Left ventricle myocardium superior (tissue), 1 donor: ENCODE measurements at regions of chr3 and their contacts with region 1.

Region 1: GRCh38 chr3:29212789-29213433 is 68.0 kb upstream of the RBMS3 start:
- DNase-seq: no peak
- ATAC-seq: no peak

Region 2: DNA sequence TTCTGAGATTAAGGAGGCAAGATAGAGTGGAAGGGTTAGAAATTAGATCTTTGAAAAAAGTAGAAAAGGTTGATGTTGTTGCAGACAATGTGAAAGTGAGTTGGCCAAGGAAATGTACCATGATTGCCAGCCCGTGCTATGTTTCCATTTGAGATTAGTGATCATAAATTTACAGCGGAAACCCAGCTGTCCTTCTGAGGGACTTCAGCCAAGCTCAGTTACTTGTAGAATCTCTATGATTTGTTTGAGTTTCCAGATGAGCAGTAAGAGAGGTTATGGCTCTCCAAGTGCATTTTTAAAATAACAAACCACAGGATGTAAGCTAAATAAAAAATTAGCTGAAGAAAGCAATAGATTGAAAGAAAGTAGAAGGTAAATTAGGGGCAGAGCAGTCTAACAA is 13.8 kb after region 1 on chr3:
- intact Hi-C with region 1: loop called (anchors 1 kb)
- DNase-seq: no peak
- ATAC-seq: no peak

Region 3: GRCh38 chr3:30012941-30013543 is 800.1 kb after region 1 on chr3:
- intact Hi-C with region 1: no loop called
- DNase-seq: peak; percentile 63
- ATAC-seq: peak; percentile 60